Activated CD4-positive, alpha-beta T cell treated with anti-CD3 and anti-CD28 coated beads for 36 hours (primary cell): ENCODE measurements at regions of chr2 and their contacts with region 1.

Region 1: DNA sequence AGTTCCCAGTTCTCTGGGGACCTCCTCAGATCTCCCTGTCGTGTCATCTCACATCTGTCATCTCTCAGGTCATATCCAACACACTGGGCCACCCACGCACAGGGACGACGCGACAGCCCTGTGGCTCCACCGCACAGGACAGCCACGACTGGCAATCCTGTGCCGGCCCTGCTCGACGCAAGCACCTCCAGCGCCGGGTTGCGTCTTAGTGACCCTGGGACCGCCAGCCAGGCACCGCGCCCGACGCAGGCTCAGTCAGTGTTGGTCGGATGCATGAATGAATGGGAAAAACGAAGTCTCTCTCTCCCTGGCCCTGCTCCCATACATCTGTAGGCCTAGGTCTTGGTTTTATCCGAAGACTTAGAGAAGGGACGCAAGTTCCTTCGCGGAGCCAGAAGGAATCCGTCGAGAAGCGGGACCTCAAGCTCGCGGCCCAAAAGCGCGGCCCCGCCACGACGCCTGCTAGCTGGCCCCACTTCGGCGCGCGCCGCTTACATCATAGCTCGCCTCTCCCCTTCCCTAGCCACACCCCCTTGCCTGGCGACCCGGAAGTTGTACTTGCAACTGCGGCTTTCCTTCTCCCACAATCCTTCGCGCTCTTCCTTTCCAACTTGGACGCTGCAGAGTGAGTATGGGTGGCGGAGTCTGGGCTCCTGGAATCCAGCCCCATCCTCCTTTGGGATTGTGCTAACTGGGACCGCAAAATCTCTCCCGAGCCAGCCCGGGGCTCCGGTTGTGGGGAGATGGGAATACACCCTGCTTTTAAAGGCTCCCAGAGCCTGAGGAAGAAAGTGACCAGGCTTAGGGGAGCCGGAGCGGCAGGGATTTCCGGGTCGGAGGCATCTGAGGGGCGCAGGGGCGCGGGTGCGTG is at the start of gene RPL31:
- DNase-seq: peak; percentile 98
- ATAC-seq: peak; percentile 95
- H3K4me3 Mint-ChIP-seq: peak within 1 kb of the TSS; percentile 99
- H3K27ac Mint-ChIP-seq: peak within 1 kb of the TSS; percentile 97
- H3K4me1 Mint-ChIP-seq: peaks cover 41% of the 10 kb centered on the region
- H3K27me3 Mint-ChIP-seq: no peaks in the 10 kb centered on the region
- total RNA-seq, gene RPL31: 889 to 1,817 TPM

Region 2: GRCh38 chr2:101012706-101013181 is 10.8 kb after region 1 on chr2:
- CTCF ChIA-PET with region 1: interaction called, 8 read pairs
- POLR2A ChIA-PET with region 1: interaction called, 10 read pairs
- intact Hi-C with region 1: no loop called
- DNase-seq: peak; percentile 49
- ATAC-seq: no peak
- H3K4me3 Mint-ChIP-seq: no peak overlapping the region
- H3K27ac Mint-ChIP-seq: peak overlapping the region; percentile 55
- H3K4me1 Mint-ChIP-seq: peaks cover 31% of the 10 kb centered on the region
- H3K27me3 Mint-ChIP-seq: no peaks in the 10 kb centered on the region

Region 3: DNA sequence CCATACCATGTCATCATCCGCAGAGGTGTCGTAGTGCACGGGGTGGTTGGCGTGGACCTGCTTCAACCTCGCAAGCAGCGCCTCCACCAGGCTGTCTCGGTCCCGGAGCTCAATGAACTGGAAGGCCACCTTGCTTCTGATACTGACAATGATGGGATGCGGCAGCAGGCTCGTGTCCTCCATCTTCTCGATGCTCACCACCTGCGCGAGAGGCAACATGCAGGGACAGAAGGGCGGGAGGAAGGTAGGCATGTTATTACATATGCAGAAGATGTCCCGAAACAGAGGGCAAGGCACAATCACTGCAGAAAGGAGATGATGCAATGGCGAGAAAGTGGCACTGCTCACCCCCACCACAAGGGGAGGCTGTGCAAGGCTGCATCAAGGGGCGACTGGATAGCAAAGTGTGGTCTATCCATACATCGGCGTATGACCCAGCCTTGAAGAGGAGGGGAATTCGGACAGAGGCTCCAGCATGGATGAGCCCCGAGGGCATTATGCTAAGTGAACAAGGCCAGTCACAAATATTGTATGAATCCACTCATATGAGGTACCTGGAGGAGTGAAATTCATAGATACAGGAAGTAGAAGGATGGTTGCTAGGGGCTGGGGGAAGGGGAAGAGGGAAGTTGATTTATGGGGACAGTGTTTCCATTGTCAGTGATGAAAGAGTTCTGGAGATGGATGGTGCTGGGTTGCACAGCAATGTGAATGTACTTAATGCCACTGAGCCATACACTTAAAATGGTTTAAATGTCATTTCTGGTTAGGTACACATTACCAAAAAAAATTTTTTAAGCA is 36.7 kb after region 1 on chr2:
- CTCF ChIA-PET with region 1: no interaction called
- POLR2A ChIA-PET with region 1: no interaction called
- intact Hi-C with region 1: no loop called
- DNase-seq: peak; percentile 66
- ATAC-seq: peak; percentile 80
- H3K4me3 Mint-ChIP-seq: no peak overlapping the region
- H3K27ac Mint-ChIP-seq: peak overlapping the region; percentile 17
- H3K4me1 Mint-ChIP-seq: no peaks in the 10 kb centered on the region
- H3K27me3 Mint-ChIP-seq: no peaks in the 10 kb centered on the region

Region 4: DNA sequence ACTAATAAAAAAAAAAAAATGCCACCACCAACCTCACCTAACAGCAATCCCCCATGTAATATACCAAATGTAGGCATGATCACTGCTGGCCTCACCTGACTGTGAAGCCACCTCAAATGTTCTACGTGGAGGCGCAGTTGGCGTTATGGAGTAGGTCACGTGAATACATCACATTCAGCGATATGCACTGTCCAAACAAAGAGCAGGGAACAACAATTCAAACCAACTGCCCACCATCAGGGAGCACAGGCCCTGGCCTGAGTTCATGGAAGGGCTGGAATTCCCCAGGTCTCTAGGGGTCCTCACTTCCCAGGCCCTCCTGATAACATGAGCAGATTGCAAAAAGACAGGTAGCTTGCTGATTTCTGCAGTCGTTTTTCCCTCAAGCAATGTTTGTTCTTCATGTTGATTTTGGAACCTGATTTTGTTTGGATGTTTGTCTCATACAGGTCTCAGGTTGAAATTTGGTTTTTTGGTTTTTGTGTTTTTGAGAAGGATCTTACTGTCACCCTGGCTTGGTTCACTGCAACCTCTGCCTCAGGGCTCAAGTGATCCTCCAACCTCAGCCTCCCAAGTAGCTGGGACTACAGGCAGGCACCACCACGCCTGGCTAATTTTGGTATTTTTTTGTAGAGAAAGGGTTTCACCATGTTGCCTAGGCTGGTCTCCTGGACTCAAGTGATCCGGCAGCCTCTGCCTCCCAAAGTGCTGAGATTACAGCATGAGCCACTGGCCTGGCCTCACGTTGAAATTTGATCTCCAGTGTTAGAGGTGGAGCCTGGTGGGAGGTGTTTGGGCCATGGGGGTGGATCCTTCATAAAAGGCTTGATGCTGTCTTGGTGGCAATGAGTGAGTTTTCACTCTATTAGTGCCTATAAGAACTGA is 133.7 kb after region 1 on chr2:
- CTCF ChIA-PET with region 1: no interaction called
- POLR2A ChIA-PET with region 1: no interaction called
- intact Hi-C with region 1: no loop called
- DNase-seq: no peak
- ATAC-seq: no peak
- H3K4me3 Mint-ChIP-seq: no peak overlapping the region
- H3K27ac Mint-ChIP-seq: no peak overlapping the region
- H3K4me1 Mint-ChIP-seq: no peaks in the 10 kb centered on the region
- H3K27me3 Mint-ChIP-seq: no peaks in the 10 kb centered on the region

Region 5: GRCh38 chr2:101151141-101151858 is 149.4 kb after region 1 on chr2 and contains the start of gene TBC1D8:
- CTCF ChIA-PET with region 1: no interaction called
- POLR2A ChIA-PET with region 1: interaction called, 7 read pairs
- intact Hi-C with region 1: loop called (anchors 1 kb)
- DNase-seq: peak; percentile 82
- ATAC-seq: peak; percentile 93
- H3K4me3 Mint-ChIP-seq: peak within 1 kb of the TSS; percentile 71
- H3K27ac Mint-ChIP-seq: peak within 1 kb of the TSS; percentile 55
- H3K4me1 Mint-ChIP-seq: peaks cover 24% of the 10 kb centered on the region
- H3K27me3 Mint-ChIP-seq: peaks cover 21% of the 10 kb centered on the region
- total RNA-seq, gene TBC1D8: 3.3 to 3.4 TPM

Region 6: GRCh38 chr2:101230541-101230993 is 228.6 kb after region 1 on chr2:
- CTCF ChIA-PET with region 1: no interaction called
- POLR2A ChIA-PET with region 1: no interaction called
- intact Hi-C with region 1: no loop called
- DNase-seq: no peak
- ATAC-seq: no peak
- H3K4me3 Mint-ChIP-seq: no peak overlapping the region
- H3K27ac Mint-ChIP-seq: no peak overlapping the region
- H3K4me1 Mint-ChIP-seq: no peaks in the 10 kb centered on the region
- H3K27me3 Mint-ChIP-seq: no peaks in the 10 kb centered on the region